PC-3 (cell line): ENCODE measurements at regions of chr2 and their contacts with region 1.

Region 1: DNA sequence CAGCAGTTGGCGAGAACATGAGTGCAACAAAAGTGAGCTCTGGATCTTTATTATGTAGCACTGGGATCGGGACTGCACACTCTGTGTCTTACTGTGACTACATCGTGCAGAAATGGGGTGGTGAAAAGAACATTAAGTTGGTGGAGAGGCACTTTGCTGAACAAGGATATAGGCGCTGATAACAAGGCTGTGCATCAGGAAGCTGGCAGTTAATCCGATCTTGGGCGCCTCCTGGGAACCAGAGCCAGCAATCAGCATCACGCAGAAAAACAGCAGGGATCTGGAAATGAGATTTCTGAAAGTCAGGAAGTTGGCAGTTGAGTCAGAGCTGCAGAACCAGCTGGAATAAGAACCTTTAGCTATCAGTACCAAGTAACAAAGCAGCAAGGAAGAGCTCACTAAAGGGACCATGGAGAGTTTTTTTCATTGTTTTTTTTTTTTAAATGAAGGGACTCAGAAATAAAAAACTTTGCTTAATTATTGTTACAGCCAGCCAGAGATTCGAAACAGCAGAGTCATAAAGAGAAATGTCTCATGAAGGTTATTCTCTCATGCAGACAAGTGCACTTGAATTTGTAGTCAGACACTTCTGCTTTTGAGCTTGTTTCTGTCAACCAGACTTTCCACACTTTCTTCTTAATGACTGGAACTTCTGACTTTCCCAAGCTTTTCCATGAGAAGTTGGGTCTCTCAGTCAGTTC is 22.8 kb upstream of the MYO3B start:
- DNase-seq: peak; percentile 74
- ATAC-seq: peak; percentile 50
- H3K4me3 ChIP-seq: no peak overlapping the region
- H3K27ac ChIP-seq: peak overlapping the region; percentile 48
- H3K4me1 ChIP-seq: peaks cover 36% of the 10 kb centered on the region
- H3K27me3 ChIP-seq: no peaks in the 10 kb centered on the region
- CTCF ChIP-seq: peak; percentile 41; the same call in 1 of the 2 replicates

Region 2: GRCh38 chr2:170221317-170222288 is 66.4 kb after region 1 on chr2:
- CTCF ChIA-PET with region 1: no interaction called
- POLR2A ChIA-PET with region 1: no interaction called
- intact Hi-C with region 1: loop called (anchors 5 kb)
- DNase-seq: peak; percentile 23
- ATAC-seq: peak; percentile 91
- H3K4me3 ChIP-seq: no peak overlapping the region
- H3K27ac ChIP-seq: no peak overlapping the region
- H3K4me1 ChIP-seq: no peaks in the 10 kb centered on the region
- H3K27me3 ChIP-seq: no peaks in the 10 kb centered on the region
- CTCF ChIP-seq: no peak

Region 3: GRCh38 chr2:170354855-170355780 is 199.9 kb after region 1 on chr2:
- CTCF ChIA-PET with region 1: no interaction called
- POLR2A ChIA-PET with region 1: no interaction called
- intact Hi-C with region 1: no loop called
- DNase-seq: no peak
- ATAC-seq: no peak
- H3K4me3 ChIP-seq: no peak overlapping the region
- H3K27ac ChIP-seq: no peak overlapping the region
- H3K4me1 ChIP-seq: no peaks in the 10 kb centered on the region
- H3K27me3 ChIP-seq: no peaks in the 10 kb centered on the region
- CTCF ChIP-seq: no peak